Heart right ventricle (tissue), 16 donors: ENCODE measurements at regions of chr9 and their contacts with region 1.

Region 1: DNA sequence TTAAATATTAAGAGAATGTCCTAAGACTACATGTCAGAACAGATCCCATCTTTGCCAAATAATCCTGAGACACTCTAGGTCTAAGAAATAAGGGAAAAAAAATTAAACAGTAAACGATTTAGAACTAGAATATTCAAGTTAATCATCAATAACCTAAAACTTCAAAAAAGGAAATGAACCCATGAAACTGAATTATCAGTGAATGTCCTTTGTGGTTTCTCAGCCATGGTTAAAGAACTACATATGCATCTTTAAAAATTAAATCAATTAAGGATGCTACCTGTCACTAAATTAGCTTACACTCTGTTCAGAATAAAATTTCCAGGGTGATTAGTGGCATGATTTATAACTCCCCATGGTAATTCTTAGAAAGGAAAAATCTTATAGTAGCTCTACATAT is 850.0 kb upstream of the C9orf72 start:
- DNase-seq: no peak
- ATAC-seq: no peak
- H3K4me3 ChIP-seq: no peak overlapping the region
- H3K27ac ChIP-seq: no peak overlapping the region
- H3K4me1 ChIP-seq: no peaks in the 10 kb centered on the region
- H3K27me3 ChIP-seq: no peaks in the 10 kb centered on the region
- CTCF ChIP-seq: no peak

Region 2: GRCh38 chr9:28120184-28120583 is 303.1 kb before region 1 on chr9:
- intact Hi-C with region 1: no loop called
- DNase-seq: no peak
- ATAC-seq: no peak
- H3K4me3 ChIP-seq: no peak overlapping the region
- H3K27ac ChIP-seq: no peak overlapping the region
- H3K4me1 ChIP-seq: no peaks in the 10 kb centered on the region
- H3K27me3 ChIP-seq: no peaks in the 10 kb centered on the region
- CTCF ChIP-seq: no peak

Region 3: GRCh38 chr9:28464481-28465216 is 41.4 kb after region 1 on chr9:
- intact Hi-C with region 1: loop called in 1 of 10 experiments (anchors 5 kb)
- DNase-seq: no peak
- ATAC-seq: no peak
- H3K4me3 ChIP-seq: no peak overlapping the region
- H3K27ac ChIP-seq: no peak overlapping the region
- H3K4me1 ChIP-seq: no peaks in the 10 kb centered on the region
- H3K27me3 ChIP-seq: no peaks in the 10 kb centered on the region
- CTCF ChIP-seq: no peak

Region 4: DNA sequence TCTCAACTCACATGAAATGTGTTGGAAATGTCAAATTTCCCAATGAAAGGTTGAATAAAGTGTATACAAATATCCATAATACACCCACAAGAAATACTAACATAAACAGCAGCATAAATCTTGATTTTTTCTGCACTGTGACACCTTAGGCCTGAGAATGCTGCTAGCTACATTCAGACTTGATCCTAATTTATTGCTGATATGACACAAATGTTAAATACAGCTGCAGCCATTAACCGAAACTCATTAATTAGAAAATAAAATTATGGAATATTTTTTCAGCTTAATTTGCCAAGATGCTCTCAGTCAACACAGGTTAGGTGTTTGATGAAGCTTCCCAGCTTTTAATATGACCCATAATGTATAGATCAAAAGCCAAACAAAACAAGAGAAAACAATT is 64.3 kb after region 1 on chr9:
- intact Hi-C with region 1: loop called in 1 of 10 experiments (anchors 10 kb)
- DNase-seq: no peak
- ATAC-seq: no peak
- H3K4me3 ChIP-seq: no peak overlapping the region
- H3K27ac ChIP-seq: no peak overlapping the region
- H3K4me1 ChIP-seq: no peaks in the 10 kb centered on the region
- H3K27me3 ChIP-seq: no peaks in the 10 kb centered on the region
- CTCF ChIP-seq: no peak